Heart left ventricle (tissue), 16 donors: ENCODE measurements at regions of chr10 and their contacts with region 1.

Region 1: DNA sequence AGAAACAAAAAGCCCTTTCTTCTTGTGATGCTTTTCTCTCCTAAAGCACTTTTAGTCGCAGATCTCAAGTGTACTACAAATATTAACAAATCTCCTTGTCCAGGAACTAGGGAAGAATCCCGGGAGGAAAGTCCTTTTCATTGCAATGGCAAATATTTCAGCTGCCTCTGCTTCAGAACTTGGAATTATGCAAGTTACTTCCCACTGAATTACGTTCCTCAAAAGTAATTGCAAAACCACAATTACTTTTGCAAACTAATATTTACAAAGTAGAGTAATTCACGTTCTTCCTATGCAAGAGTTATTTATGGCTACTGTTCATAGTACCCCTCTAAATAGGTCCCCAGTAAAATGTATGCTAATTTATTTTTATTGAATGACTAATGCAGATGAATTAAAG is 14.5 kb downstream of the PRKCQ start:
- DNase-seq: no peak
- ATAC-seq: no peak
- H3K4me3 ChIP-seq: no peak overlapping the region
- H3K27ac ChIP-seq: peak overlapping the region in 1 of 12 donors; percentile 7
- H3K4me1 ChIP-seq: peaks cover 0 to 45% (median 0%) of the 10 kb centered on the region in 12 donors
- H3K27me3 ChIP-seq: peaks cover 0 to 24% (median 4%) of the 10 kb centered on the region in 9 donors
- CTCF ChIP-seq: no peak
- POLR2A ChIP-seq: no peak

Region 2: GRCh38 chr10:6591668-6592067 is 26.1 kb after region 1 on chr10:
- intact Hi-C with region 1: loop called in 1 of 10 experiments (anchors 1 kb)
- DNase-seq: no peak
- ATAC-seq: no peak
- H3K4me3 ChIP-seq: no peak overlapping the region
- H3K27ac ChIP-seq: peak overlapping the region in 1 of 12 donors; percentile 17
- H3K4me1 ChIP-seq: no peaks in the 10 kb centered on the region
- H3K27me3 ChIP-seq: peaks cover 0 to 33% (median 0%) of the 10 kb centered on the region in 9 donors
- CTCF ChIP-seq: no peak
- POLR2A ChIP-seq: no peak